ENCODE measurements at regions of chr22 and their contacts with region 1.

Region 1: GRCh38 chr22:37982938-37983859 is 1.2 kb downstream of the SOX10 start:
- DNase-seq: peak; percentile 82
- ATAC-seq: peak; percentile 59
- H3K4me3 Mint-ChIP-seq: peak overlapping the region; percentile 69
- H3K27ac Mint-ChIP-seq: no peak overlapping the region
- H3K4me1 Mint-ChIP-seq: peaks cover 22% of the 10 kb centered on the region
- H3K27me3 Mint-ChIP-seq: peaks cover 19% of the 10 kb centered on the region
- CTCF ChIP-seq: peak; percentile 87

Region 2: DNA sequence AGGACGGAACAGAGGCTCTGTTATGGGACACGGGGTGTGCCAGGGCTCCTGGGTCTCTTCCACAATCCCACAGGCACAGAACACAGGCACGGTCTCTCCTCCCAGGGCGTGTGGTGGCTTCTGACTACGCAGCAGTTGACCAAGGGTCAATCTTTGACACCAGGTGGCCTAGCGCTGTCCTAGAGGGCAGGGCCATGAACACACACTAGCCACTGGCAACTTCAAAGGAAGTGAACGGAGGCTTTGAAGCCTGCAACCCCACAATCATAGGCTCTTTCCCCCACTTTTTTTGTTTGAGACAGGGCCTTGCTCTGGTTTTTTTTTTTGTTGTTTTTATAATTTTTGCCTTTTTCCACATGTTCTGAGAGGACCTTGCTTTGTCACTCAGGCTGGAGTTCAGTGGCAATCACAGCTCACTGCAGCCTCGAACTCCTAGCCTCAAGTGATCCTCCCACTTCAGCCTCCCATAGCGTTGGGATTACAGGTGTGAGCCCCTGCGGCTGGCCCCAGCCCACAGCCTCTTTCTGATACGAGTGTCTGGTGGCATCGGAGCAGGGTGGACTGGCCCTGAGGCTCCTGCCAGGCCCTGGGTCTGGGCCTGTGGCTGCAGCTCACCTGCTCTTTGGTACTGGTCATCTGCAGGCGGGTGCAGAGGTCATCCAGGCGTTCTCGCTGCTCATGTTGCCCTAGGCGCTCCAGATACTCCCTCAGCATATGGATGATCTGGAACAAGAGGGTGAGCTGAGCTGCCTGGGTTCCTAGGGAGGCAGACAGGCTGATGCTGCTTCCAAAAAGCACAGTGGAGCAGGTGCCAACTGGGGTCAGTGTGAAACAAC is 151.0 kb before region 1 on chr22:
- CTCF ChIA-PET with region 1: no interaction called
- POLR2A ChIA-PET with region 1: no interaction called
- DNase-seq: no peak
- ATAC-seq: no peak
- H3K4me3 Mint-ChIP-seq: no peak overlapping the region
- H3K27ac Mint-ChIP-seq: no peak overlapping the region
- H3K4me1 Mint-ChIP-seq: no peaks in the 10 kb centered on the region
- H3K27me3 Mint-ChIP-seq: no peaks in the 10 kb centered on the region
- CTCF ChIP-seq: no peak

Region 3: DNA sequence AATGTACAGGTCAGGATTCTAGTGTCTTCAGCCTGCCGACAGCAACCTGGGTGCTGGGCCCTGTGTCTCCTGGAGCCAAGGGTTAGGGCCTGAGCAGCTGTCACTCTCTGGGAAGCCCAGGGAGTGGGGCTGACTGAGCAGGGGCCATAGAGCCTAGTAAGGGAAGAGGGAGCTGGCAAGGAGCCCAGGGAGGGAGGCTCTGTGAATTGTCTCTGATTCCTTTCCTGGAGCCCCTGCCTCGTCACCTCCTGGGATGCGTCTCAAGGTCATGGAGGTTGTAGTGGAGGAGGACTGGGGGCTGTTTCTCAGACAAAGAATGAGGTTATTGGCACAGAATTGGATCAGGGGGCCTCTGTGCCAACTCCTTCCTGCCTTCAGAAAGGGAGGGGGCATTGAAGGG is 10.7 kb before region 1 on chr22:
- CTCF ChIA-PET with region 1: interaction called, 25 read pairs
- POLR2A ChIA-PET with region 1: no interaction called
- DNase-seq: no peak
- ATAC-seq: no peak; the same call in 1 of the 2 replicates
- H3K4me3 Mint-ChIP-seq: no peak overlapping the region
- H3K27ac Mint-ChIP-seq: no peak overlapping the region
- H3K4me1 Mint-ChIP-seq: peaks cover 25% of the 10 kb centered on the region
- H3K27me3 Mint-ChIP-seq: no peaks in the 10 kb centered on the region
- CTCF ChIP-seq: no peak

Region 4: DNA sequence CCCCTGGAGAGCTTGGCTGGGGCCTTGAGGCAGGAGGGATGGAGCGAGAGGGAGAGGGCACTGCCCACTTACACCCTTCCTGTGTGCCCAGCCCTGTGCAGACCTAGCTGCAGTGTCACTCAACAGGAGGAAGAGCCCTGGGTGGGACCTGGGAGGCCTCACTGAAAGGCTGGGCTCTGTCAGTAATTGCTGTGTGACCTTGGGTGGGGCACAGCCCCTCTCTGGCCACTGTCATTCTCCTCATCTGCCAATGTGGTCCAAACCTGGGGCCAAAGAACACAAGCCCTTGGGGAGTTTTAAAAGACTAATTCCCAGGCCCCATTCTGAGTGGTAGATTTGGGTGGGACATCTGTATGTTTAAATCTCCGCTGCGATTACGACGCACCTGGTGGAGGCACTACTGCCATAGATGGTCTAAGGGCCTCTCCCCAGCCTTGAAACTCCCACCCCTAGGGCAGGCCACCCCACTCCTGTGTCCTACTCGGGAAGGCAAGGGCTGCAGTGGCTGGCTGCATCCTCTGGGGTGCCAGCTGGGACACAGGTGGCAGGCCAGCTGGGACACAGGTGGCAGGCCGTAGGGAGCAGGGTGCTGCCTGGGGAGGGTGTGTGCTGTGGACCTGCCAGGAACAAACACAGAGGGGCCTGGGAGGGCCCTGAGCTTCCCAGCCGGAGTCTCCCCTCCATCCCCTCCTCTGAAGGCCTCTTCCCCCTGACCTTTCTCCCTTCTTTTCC is 13.5 kb after region 1 on chr22:
- CTCF ChIA-PET with region 1: interaction called, 36 read pairs
- POLR2A ChIA-PET with region 1: interaction called, 3 read pairs
- DNase-seq: no peak
- ATAC-seq: peak; percentile 14; the same call in 1 of the 2 replicates
- H3K4me3 Mint-ChIP-seq: no peak overlapping the region
- H3K27ac Mint-ChIP-seq: no peak overlapping the region
- H3K4me1 Mint-ChIP-seq: peaks cover 27% of the 10 kb centered on the region
- H3K27me3 Mint-ChIP-seq: no peaks in the 10 kb centered on the region
- CTCF ChIP-seq: no peak

Region 5: GRCh38 chr22:38034274-38034882 is 51.2 kb after region 1 on chr22:
- CTCF ChIA-PET with region 1: interaction called, 24 read pairs
- POLR2A ChIA-PET with region 1: no interaction called
- DNase-seq: peak; percentile 71
- ATAC-seq: peak; percentile 79
- H3K4me3 Mint-ChIP-seq: no peak overlapping the region
- H3K27ac Mint-ChIP-seq: peak overlapping the region; percentile 34
- H3K4me1 Mint-ChIP-seq: peaks cover 31% of the 10 kb centered on the region
- H3K27me3 Mint-ChIP-seq: no peaks in the 10 kb centered on the region; the same call in 1 of the 2 replicates
- CTCF ChIP-seq: no peak